ENCODE measurements at regions of chr16 and their contacts with region 1.

Region 1: DNA sequence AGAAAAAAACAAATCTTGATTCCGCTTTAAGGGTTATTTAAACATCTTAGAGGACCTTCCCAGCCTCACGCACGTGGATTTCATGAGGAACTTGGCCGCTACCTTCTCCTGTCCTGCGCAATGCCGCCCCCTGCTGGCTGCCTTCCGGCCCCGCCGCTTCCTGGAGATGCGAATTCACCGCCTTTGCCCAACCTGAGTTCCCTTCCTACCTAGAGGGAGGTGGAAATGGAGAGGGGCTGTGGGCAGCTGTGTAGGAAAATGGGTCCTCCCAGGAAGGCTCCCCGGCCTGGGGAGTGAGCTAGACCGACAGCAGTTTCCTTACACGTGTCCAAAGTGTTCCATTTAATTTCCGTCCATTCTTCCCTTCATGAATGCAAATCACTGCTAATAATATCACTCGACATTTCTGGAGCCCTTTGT is 1.0 kb upstream of the ABCC12 start:
- DNase-seq: peak; percentile 74
- CTCF ChIP-seq: peak; percentile 99

Region 2: GRCh38 chr16:47141773-47142485 is 1014.9 kb before region 1 on chr16:
- in situ Hi-C with region 1: loop called (anchors 10 kb)
- DNase-seq: peak; percentile 84
- CTCF ChIP-seq: peak; percentile 92

Region 3: DNA sequence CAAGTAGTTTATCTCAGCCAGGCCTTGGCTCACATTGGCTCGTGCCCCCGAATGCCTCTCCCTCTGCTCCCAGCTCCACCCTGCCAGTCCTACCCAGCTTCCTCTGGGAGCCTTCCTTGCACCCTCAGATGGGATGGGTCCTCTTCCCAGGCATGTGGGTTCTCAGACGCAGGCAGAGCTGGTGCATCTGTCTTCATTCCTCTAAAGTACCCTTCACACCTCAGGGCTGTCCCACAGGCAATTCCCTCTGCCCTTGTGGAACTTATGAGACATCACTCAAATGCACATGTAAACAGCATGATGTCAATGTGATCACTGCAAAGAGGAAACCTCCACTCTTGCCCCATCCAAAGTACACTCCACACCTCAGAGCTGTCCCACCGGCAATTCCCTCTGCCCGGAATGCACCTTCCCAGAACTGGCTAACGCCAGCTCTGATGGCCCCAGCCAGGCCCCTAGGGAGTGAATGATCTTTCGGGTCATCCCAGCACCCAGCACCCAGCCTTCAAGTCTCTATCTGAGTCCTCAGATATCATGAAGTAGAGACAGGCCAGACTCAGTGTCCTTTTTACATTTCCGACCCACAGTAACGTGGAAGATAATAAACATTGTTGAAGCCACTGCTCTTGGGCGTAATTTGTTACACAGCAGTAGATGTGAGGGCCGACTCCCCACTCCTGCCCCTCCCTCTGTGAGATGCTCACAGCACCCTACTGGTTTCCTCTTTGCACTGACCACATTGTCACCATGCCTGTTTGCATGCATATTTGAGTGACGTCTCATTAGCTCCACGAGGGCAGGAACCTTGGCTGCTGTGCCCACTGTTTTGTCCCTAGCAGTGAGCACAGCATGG is 367.8 kb after region 1 on chr16:
- in situ Hi-C with region 1: no loop called
- DNase-seq: no peak
- CTCF ChIP-seq: no peak

Region 4: DNA sequence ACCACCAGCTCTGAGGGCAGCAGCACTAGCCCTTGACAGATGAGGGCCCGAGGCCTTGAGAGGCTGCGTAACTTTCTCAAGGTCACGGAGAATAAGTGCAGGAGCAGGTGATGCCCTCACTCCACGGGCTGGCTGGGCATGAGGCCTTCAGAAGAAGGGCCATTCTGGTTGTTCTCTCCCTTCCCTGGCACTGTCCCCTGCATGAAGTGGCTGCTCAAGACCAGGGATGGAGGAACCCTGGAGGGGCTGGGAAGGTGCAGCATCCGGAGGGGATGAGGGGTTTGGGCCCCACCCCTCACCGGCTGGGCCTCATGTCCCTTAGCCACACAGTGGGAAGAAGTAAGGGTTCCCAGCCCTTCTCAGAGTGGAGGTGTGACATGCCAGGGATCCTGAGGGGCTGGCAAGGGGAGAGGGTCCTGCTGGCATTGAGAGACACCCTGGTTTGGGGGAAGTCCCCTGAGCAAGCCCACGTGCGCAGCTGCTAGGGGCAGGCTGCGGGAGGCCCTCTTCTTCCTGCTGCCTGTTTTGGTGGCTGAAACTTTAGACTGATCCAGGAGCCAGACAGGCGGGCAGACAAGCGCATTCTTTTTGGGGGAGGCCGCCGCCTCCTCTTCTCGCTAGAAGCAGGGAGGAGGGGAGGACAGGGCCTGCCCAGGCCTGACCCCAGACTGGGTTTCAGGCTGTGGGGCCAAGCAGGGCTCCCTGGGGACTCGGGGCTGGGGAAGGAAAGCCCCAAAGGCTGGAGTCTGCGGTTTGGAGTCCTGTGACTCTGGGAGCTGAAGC is 379.2 kb after region 1 on chr16:
- in situ Hi-C with region 1: no loop called
- DNase-seq: peak; percentile 77
- CTCF ChIP-seq: no peak